ENCODE measurements at regions of chr10 and their contacts with region 1.

Region 1: DNA sequence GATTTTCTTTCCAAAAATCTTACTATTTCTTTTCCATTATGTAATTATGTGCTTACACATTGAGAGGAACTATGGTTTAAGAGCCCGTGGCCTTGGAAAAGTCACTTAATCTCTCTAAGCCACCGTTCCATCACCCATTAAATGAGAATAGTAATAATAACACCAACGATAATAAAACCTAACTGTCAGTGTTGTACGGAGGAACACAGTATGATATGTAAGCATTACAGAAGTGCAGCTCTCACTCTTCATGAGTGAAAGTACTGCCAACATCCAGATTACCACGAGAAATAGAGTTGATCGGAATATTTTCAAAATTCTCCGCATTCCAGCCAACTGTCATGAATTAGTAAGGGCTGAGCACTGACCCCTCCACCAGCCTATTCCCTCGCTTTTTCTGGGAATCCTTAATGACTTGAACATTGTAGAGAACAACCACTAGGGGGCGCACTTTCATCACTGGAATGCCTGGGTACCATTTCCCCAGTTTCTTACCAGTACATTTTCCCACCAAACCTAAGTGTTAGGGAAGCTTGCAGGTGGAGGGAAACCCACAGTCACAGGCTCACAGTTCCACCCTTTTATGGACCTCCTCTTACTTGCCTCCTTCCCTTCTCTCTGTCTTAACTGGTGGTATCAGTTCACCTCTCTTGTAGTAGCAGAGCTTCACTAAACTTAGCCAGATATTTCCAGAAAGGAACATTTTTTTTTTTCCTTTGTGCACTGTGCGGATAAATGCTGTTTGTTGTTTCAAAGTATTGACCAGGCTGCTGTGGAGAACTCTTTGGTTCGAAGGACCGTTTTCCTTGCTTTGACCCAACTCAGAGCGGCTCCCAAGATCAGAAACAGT is 27.8 kb downstream of the NKX2-3 start:
- DNase-seq: peak; percentile 51 to 67 (median 54)
- ATAC-seq: peak; percentile 87
- H3K4me3 ChIP-seq: no peak overlapping the region
- H3K27ac ChIP-seq: no peak overlapping the region
- H3K4me1 ChIP-seq: no peaks in the 10 kb centered on the region
- H3K27me3 ChIP-seq: peaks cover 1 to 7% of the 10 kb centered on the region in 2 experiments; a peak in 3 of 5 replicates
- CTCF ChIP-seq: peak; percentile 42 to 70 (median 69)
- EP300 ChIP-seq: no peak
- POLR2A ChIP-seq: no peak
- RAD21 ChIP-seq: peak; percentile 48 to 78

Region 2: GRCh38 chr10:99484603-99485581 is 75.6 kb before region 1 on chr10:
- CTCF ChIA-PET with region 1: no interaction called
- POLR2A ChIA-PET with region 1: no interaction called
- in situ Hi-C with region 1: no loop called
- intact Hi-C with region 1: loop called (anchors 10 kb)
- DNase-seq: peak; percentile 14 to 33 (median 26)
- ATAC-seq: peak; percentile 69; the same call in 2 of the 3 replicates
- H3K4me3 ChIP-seq: no peak overlapping the region
- H3K27ac ChIP-seq: no peak overlapping the region
- H3K4me1 ChIP-seq: no peaks in the 10 kb centered on the region
- H3K27me3 ChIP-seq: peaks cover 0 to 10% of the 10 kb centered on the region in 2 experiments; a peak in 3 of 5 replicates
- CTCF ChIP-seq: peak; percentile 41 to 44 (median 42)
- EP300 ChIP-seq: no peak
- POLR2A ChIP-seq: no peak
- RAD21 ChIP-seq: peak in 1 of 2 experiments; percentile 29; a peak in 1 of 4 replicates

Region 3: DNA sequence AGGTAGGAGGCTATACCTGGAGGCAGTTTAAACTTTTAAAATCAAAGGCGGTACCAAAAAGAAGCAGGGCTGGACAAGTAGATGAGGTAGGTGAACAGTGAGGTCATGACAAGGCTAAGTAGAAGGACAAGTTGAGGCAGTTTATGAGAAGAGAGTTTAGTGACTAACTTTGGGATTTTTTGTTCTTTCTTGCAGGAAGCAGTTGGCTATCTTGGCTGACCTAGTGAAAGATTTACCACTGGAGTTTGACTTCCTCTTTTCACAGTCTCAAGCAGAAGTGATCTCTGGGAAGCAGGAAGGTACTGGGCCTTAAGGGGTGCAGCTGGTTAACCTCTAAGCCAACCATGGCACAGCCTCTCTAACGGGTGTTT is 125.1 kb after region 1 on chr10:
- CTCF ChIA-PET with region 1: no interaction called
- POLR2A ChIA-PET with region 1: no interaction called
- in situ Hi-C with region 1: no loop called
- intact Hi-C with region 1: no loop called
- DNase-seq: peak in 2 of 4 experiments; percentile 21 to 50
- ATAC-seq: peak; percentile 83
- H3K4me3 ChIP-seq: no peak overlapping the region
- H3K27ac ChIP-seq: peak overlapping the region; percentile 72; the same call in 2 of the 3 replicates
- H3K4me1 ChIP-seq: peaks cover 0 to 5% of the 10 kb centered on the region in 2 experiments; a peak in 3 of 5 replicates
- H3K27me3 ChIP-seq: no peaks in the 10 kb centered on the region
- CTCF ChIP-seq: no peak
- EP300 ChIP-seq: no peak
- POLR2A ChIP-seq: no peak
- RAD21 ChIP-seq: no peak

Measured in K562 (cell line).